HepG2 (cell line): ENCODE measurements at regions of chr1 and their contacts with region 1.

Region 1: GRCh38 chr1:155591770-155592169 is 18.2 kb upstream of the MSTO1 start:
- DNase-seq: peak; percentile 68
- ATAC-seq: peak; percentile 68
- H3K4me3 ChIP-seq: no peak overlapping the region
- H3K27ac ChIP-seq: no peak overlapping the region
- H3K4me1 ChIP-seq: no peaks in the 10 kb centered on the region
- H3K27me3 ChIP-seq: no peaks in the 10 kb centered on the region
- CTCF ChIP-seq: peak; percentile 72
- EP300 ChIP-seq: no peak
- POLR2A ChIP-seq: no peak
- RAD21 ChIP-seq: peak; percentile 33; the same call in 1 of the 2 replicates

Region 2: DNA sequence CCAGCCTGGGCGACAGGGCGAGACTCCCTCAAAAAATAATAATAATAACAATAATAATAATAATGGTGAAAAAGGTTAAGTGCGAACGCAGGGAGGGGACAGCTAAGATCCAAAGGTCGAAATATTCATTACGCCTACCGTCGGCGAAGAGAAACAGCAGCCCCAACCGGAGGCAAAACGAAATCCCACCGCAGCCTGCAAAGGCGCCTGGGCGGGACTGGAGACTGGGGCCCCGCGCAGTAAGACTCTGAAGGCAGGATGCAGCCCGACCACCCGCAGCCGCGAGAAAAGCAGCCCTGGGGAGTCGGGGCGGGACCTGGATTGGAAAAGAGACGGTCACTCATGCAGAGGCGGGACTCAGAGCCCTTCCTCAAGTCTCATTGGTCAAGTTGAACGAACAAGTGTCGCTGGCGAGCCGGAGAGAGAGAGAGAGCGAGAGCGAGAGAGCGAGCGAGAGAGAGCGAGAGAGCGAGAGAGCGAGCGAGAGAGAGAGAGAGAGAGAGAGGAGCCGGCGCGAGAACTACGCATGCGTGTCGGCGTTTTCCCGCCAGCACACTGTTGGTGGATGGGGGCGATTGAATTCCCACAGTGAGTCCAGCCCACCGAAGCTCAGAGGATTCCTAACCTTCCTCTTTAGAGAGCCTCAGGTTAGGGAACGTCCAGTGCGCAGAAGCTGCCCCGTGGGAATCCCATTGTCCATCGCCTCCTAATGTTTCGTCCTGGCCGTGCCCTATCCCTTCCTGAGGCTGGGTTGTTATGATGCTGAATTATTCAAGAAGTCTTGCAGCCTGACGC is 347.2 kb before region 1 on chr1:
- CTCF ChIA-PET with region 1: no interaction called
- POLR2A ChIA-PET with region 1: no interaction called
- in situ Hi-C with region 1: loop called (anchors 10 kb)
- intact Hi-C with region 1: no loop called
- DNase-seq: no peak
- ATAC-seq: no peak
- H3K4me3 ChIP-seq: no peak overlapping the region; a peak in 1 of 6 replicates
- H3K27ac ChIP-seq: no peak overlapping the region
- H3K4me1 ChIP-seq: peaks cover 15% of the 10 kb centered on the region
- H3K27me3 ChIP-seq: no peaks in the 10 kb centered on the region
- CTCF ChIP-seq: no peak
- EP300 ChIP-seq: no peak
- POLR2A ChIP-seq: no peak
- RAD21 ChIP-seq: no peak

Region 3: DNA sequence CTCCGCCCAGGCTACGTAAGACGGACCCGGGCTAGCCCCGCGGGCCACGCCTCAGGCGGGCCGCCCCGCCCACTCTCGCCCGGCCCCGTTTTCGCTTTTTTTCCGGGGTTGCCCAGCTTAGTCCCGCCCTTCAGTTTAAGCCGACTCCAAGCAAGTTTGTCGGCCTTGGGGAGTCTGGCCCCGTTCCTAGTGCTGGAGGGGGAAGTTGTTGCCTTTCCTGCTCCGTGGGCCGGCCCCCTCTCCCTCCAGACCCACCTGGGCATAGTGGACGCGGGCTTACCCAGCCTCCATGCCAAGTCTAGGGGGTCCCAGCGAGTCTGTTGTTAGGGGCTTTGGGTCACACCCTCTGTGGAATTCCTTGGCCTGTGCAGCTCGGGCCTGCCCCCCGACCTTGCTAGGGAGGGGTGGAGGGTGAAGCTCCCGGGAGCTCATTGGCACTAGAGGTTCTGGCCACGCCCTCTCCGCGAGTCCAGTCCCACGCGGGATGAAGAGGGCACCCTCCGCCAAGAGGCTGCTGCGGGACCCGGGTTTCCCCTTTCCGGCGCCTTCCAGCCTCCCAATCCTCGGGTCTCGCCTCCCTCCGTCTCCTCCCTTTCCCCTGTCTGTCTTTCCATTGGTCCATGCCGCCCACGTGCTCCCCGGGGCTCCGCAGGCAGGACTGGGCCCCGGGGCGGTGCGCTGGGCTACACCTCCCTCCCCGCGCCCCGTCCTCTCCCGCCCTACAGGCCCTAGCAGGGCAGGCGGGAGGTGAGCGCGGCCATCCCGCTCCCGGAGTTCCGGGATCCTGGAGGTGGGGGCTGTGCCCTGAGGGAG is 267.8 kb before region 1 on chr1:
- CTCF ChIA-PET with region 1: no interaction called
- POLR2A ChIA-PET with region 1: no interaction called
- in situ Hi-C with region 1: no loop called
- intact Hi-C with region 1: loop called (anchors 5 kb)
- DNase-seq: peak; percentile 93
- ATAC-seq: peak; percentile 84
- H3K4me3 ChIP-seq: peak overlapping the region; percentile 80 to 94 (median 81)
- H3K27ac ChIP-seq: peak overlapping the region; percentile 71
- H3K4me1 ChIP-seq: peaks cover 36% of the 10 kb centered on the region
- H3K27me3 ChIP-seq: no peaks in the 10 kb centered on the region; a peak in 1 of 5 replicates
- CTCF ChIP-seq: no peak
- EP300 ChIP-seq: no peak
- POLR2A ChIP-seq: peak in 1 of 2 experiments; percentile 61; a peak in 2 of 4 replicates
- RAD21 ChIP-seq: no peak

Region 4: DNA sequence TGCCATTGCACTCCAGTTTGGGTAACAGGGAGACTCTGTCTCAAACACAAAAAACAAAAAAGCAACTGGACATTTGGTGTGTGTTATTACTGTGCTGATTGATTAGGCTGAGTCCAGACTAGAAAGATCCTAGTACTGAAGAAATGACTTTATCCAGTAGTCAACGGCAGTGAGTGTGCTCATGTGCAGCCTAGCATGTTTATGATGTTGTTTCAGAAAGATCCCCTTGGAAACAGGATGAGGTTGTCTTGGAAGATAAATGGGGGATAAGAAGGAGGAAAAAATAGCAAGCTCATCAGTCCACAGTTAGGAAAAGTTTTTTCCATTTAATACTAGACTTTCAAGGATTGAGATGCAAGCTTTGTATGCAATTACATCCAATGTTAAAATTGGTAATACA is 256.8 kb before region 1 on chr1:
- CTCF ChIA-PET with region 1: no interaction called
- POLR2A ChIA-PET with region 1: no interaction called
- in situ Hi-C with region 1: no loop called
- intact Hi-C with region 1: no loop called
- DNase-seq: no peak
- ATAC-seq: no peak
- H3K4me3 ChIP-seq: no peak overlapping the region
- H3K27ac ChIP-seq: no peak overlapping the region
- H3K4me1 ChIP-seq: no peaks in the 10 kb centered on the region
- H3K27me3 ChIP-seq: no peaks in the 10 kb centered on the region
- CTCF ChIP-seq: no peak
- EP300 ChIP-seq: no peak
- POLR2A ChIP-seq: no peak
- RAD21 ChIP-seq: no peak

Region 5: GRCh38 chr1:155527677-155528076 is 64.1 kb before region 1 on chr1:
- CTCF ChIA-PET with region 1: no interaction called
- POLR2A ChIA-PET with region 1: no interaction called
- in situ Hi-C with region 1: no loop called
- intact Hi-C with region 1: no loop called
- DNase-seq: no peak
- ATAC-seq: no peak
- H3K4me3 ChIP-seq: no peak overlapping the region
- H3K27ac ChIP-seq: no peak overlapping the region
- H3K4me1 ChIP-seq: peaks cover 30% of the 10 kb centered on the region
- H3K27me3 ChIP-seq: no peaks in the 10 kb centered on the region
- CTCF ChIP-seq: no peak
- EP300 ChIP-seq: no peak
- POLR2A ChIP-seq: no peak
- RAD21 ChIP-seq: no peak